ENCODE measurements at regions of chr1 and their contacts with region 1.

Region 1: DNA sequence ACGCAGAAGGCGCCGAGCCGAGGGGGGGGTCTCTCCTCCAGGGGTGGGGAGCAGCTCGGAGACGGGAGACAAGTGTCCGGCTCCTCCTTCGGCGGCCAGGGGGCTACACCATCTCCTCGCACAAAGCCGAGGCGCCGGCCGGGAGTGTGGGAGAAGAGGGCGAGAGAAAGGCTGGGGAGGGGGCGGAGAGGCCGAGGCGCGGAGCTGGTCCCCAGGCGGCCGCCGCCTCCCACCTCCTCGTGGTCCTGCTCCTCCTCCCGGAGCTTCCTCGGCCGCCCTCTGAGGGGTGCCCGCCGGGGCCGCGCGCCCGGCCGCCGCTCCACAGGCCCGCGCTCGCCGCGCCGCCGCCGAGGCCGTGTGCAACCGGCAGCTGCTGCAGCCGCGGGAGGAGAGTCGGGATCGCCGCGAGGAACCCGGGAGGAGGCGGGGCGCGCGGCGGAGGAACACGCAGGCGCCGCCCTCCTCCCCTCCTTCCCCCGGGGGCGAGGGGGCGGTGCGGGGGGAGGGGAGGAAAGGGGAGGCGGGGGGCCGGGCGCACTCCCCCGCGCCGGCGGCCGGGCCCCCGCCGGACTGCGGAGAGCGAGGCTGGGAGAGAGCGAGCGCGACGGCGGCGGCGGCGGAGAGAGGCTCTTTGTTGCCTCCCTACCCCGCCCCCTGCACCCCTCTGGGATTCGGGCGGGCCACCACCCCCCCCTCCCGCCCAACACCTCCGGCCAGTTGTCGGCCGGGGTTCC is at the start of gene ENAH:
- DNase-seq: peak; percentile 76
- H3K4me3 ChIP-seq: peak within 1 kb of the TSS; percentile 81 to 99 (median 89)
- H3K27ac ChIP-seq: peak within 1 kb of the TSS; percentile 83
- H3K4me1 ChIP-seq: peaks cover 33% of the 10 kb centered on the region
- H3K27me3 ChIP-seq: no peaks in the 10 kb centered on the region
- CTCF ChIP-seq: no peak
- total RNA-seq, gene ENAH: 109 to 117 TPM

Region 2: GRCh38 chr1:225467193-225468020 is 185.5 kb before region 1 on chr1:
- CTCF ChIA-PET with region 1: no interaction called
- dilution Hi-C with region 1: no loop called
- in situ Hi-C with region 1: no loop called
- intact Hi-C with region 1: no loop called
- DNase-seq: no peak
- H3K4me3 ChIP-seq: no peak overlapping the region
- H3K27ac ChIP-seq: no peak overlapping the region
- H3K4me1 ChIP-seq: peaks cover 13% of the 10 kb centered on the region
- H3K27me3 ChIP-seq: no peaks in the 10 kb centered on the region
- CTCF ChIP-seq: no peak

Region 3: DNA sequence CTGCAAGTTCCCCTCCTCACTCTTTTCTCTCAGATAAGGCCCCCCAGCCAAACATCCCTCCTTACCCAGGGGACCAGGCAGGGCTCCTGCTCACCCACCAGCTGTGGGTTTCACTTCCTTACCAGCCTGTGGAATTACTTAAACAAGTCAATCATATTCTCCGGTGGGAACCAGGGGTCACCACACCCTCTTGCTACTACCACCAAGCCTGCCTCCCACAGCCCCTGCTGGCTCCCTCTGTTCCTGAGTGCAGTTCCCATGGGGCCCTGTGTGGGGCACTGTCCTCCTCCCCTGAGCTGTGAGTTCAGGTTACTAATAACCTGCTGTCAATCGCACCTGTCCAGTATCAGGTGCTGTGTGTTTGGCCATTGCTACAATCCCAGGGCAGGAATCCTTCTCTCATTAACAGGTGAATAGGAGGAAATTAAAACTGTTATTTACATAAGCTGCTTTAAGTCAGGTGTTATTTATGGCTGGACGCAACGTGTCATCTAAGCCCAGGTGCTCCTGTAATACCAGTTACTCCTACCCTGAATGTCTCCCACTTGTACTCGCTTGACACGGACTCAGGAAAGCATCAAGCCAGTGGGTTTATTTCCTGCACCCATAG is 172.0 kb before region 1 on chr1:
- CTCF ChIA-PET with region 1: no interaction called
- dilution Hi-C with region 1: no loop called
- in situ Hi-C with region 1: no loop called
- intact Hi-C with region 1: loop called (anchors 1 kb)
- DNase-seq: peak; percentile 28
- H3K4me3 ChIP-seq: no peak overlapping the region
- H3K27ac ChIP-seq: no peak overlapping the region
- H3K4me1 ChIP-seq: no peaks in the 10 kb centered on the region
- H3K27me3 ChIP-seq: no peaks in the 10 kb centered on the region
- CTCF ChIP-seq: peak; percentile 93 to 95

Region 4: GRCh38 chr1:225554216-225554812 is 98.6 kb before region 1 on chr1:
- CTCF ChIA-PET with region 1: interaction called, 5 read pairs
- dilution Hi-C with region 1: no loop called
- in situ Hi-C with region 1: no loop called
- intact Hi-C with region 1: loop called (anchors 2 kb)
- DNase-seq: no peak
- H3K4me3 ChIP-seq: no peak overlapping the region
- H3K27ac ChIP-seq: no peak overlapping the region
- H3K4me1 ChIP-seq: no peaks in the 10 kb centered on the region
- H3K27me3 ChIP-seq: no peaks in the 10 kb centered on the region
- CTCF ChIP-seq: peak; percentile 52 to 57

Region 5: DNA sequence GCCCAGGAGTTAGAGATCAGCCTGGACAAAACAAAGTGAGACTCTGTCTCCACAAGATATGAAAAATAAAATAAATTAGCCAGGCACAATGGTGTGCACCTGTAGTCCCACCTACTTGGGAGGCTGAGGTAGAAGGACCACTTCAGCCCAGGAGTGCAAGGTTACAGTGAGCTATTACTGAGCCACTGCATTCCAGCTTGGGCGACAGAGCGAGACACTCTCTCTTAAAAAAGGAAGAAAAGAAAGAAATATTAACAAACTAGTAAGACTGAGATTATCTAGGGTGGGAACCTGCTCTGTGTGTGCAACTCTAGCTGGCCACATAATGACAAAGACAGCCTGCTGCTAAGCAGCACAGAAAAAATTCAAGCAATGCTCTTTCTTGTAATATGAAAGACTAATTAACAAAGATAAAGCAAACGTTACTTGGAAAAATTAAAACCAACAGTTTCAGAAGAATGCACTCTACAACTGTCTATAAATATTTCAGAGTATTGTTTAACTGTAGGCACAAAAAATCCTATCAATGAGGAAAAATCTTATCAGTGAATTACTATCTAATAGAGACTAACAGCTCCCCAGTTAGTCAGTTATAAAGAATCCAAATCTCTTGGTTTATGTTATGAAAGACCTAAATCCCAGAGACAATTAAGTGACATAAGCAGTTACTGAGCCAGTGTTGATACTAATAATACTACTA is 74.5 kb before region 1 on chr1:
- CTCF ChIA-PET with region 1: no interaction called
- dilution Hi-C with region 1: no loop called
- in situ Hi-C with region 1: no loop called
- intact Hi-C with region 1: loop called (anchors 5 kb)
- DNase-seq: no peak
- H3K4me3 ChIP-seq: no peak overlapping the region
- H3K27ac ChIP-seq: no peak overlapping the region
- H3K4me1 ChIP-seq: no peaks in the 10 kb centered on the region
- H3K27me3 ChIP-seq: no peaks in the 10 kb centered on the region
- CTCF ChIP-seq: no peak

Region 6: GRCh38 chr1:225603538-225604354 is 49.1 kb before region 1 on chr1:
- CTCF ChIA-PET with region 1: no interaction called
- dilution Hi-C with region 1: no loop called
- in situ Hi-C with region 1: no loop called
- intact Hi-C with region 1: loop called (anchors 5 kb)
- DNase-seq: peak; percentile 66
- H3K4me3 ChIP-seq: peak overlapping the region in 1 of 3 experiments; percentile 21
- H3K27ac ChIP-seq: peak overlapping the region; percentile 6
- H3K4me1 ChIP-seq: peaks cover 18% of the 10 kb centered on the region
- H3K27me3 ChIP-seq: no peaks in the 10 kb centered on the region
- CTCF ChIP-seq: no peak

Region 7: DNA sequence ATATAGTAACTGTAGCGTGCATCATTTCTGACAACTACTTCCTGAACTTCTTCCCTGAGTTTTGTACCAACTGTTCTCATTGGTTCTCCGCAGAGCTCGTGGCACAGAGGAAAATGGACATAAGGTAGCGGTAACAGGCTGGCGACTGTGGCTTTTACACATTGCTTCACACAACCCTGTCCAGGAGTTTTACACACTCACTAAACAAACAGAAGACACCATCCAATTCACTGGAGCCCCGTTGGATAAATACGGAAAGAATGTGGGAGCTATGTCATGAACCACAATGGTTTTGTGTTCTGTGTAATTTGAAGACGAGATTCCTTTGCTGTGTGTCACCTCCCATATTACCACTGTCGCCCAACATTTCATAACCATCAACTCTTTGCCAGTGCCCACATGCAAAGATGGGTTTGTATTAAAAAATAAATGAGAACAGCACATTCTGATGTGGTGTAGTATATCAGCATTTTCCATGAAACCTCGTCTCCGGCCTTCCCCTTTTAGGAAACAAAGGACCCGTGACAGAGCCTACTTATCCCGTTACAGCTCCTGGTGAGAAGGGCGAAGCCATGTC is 47.4 kb after region 1 on chr1:
- CTCF ChIA-PET with region 1: interaction called, 3 read pairs
- dilution Hi-C with region 1: no loop called
- in situ Hi-C with region 1: no loop called
- intact Hi-C with region 1: loop called (anchors 1 kb)
- DNase-seq: peak; percentile 100
- H3K4me3 ChIP-seq: no peak overlapping the region
- H3K27ac ChIP-seq: peak overlapping the region; percentile 79
- H3K4me1 ChIP-seq: peaks cover 19% of the 10 kb centered on the region
- H3K27me3 ChIP-seq: no peaks in the 10 kb centered on the region
- CTCF ChIP-seq: no peak

Region 8: GRCh38 chr1:225772323-225772768 is 119.5 kb after region 1 on chr1:
- CTCF ChIA-PET with region 1: interaction called, 3 read pairs
- dilution Hi-C with region 1: no loop called
- in situ Hi-C with region 1: loop called in 1 of 2 experiments (anchors 25 kb)
- intact Hi-C with region 1: loop called (anchors 1 kb)
- DNase-seq: peak; percentile 87
- H3K4me3 ChIP-seq: peak overlapping the region in 1 of 3 experiments; percentile 18
- H3K27ac ChIP-seq: no peak overlapping the region
- H3K4me1 ChIP-seq: peaks cover 40% of the 10 kb centered on the region
- H3K27me3 ChIP-seq: no peaks in the 10 kb centered on the region
- CTCF ChIP-seq: peak; percentile 94 to 96

Measured in mammary epithelial cell (primary cell).